Gastrocnemius medialis (tissue), 4 donors: ENCODE measurements at regions of chrX and their contacts with region 1.

Region 1: GRCh38 chrX:110317820-110318658 is at the start of gene AMMECR1:
- DNase-seq: peak; percentile 44 to 72
- ATAC-seq: peak; percentile 90
- H3K4me3 ChIP-seq: peak within 1 kb of the TSS; percentile 67 to 85 (median 76)
- H3K27ac ChIP-seq: peak within 1 kb of the TSS; percentile 83 to 92 (median 88)
- H3K4me1 ChIP-seq: peaks cover 6 to 7% of the 10 kb centered on the region in 2 donors
- H3K27me3 ChIP-seq: no peaks in the 10 kb centered on the region
- CTCF ChIP-seq: peak in 1 of 5 experiments; percentile 3
- POLR2A ChIP-seq: peak; percentile 46 to 59
- total RNA-seq, gene AMMECR1: 1.2 to 2.6 (median 1.9) TPM

Region 2: DNA sequence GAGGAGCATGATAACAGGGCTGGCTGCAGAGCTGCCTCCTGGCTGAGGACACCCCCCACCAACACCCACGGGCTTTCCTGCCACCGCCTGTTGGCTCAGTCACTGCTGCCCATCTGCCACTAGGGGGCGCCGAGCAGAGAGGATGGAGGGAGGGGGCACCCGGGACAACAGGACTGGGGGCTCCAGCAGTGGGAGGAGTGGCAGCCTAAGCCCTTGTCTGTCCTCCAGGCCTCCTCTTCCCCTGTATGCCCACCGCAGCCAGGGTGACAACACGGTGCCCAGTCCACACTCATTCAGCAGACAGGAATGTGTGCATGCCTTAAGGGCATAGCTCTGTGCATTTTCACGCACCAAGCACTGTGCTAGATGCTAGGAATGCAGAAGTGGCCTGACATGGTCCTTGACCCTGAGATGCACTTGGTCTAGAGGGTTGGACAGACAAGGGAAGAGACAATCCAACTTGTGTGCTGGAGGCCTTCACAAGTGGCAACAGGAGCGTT is 150.0 kb before region 1 on chrX:
- in situ Hi-C with region 1: no loop called
- intact Hi-C with region 1: loop called (anchors 5 kb)
- DNase-seq: no peak
- ATAC-seq: no peak
- H3K4me3 ChIP-seq: no peak overlapping the region
- H3K27ac ChIP-seq: no peak overlapping the region
- H3K4me1 ChIP-seq: peaks cover 0 to 8% of the 10 kb centered on the region in 2 donors
- H3K27me3 ChIP-seq: no peaks in the 10 kb centered on the region
- CTCF ChIP-seq: peak in 4 of 5 experiments; percentile 13 to 57 (median 40)
- POLR2A ChIP-seq: no peak